Activated CD4-positive, alpha-beta T cell treated with anti-CD3 and anti-CD28 coated beads, Interleukin-2, amount 10 ng/mL, durations not matched to agents 24 days and 14 days (primary cell): ENCODE measurements at regions of chr5 and their contacts with region 1.

Region 1: DNA sequence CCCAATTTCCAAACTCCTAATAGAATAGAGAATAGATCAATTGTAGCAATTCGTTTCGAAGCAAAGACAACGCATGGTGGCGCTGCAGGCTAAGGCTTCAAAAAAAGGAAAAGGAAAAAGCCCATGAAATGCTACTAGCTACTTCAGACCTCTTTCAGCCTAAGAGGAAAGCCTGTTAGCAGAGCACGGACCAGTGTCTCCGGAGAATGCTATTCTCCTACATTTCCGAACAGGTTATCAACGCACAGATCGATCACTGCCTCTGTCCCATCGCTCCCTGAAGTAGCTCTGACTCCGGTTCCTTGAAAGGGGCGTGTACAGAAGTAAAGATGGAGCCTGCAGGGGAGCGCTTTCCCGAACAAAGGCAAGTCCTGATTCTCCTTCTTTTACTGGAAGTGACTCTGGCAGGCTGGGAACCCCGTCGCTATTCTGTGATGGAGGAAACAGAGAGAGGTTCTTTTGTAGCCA is at the start of gene PCDHB15:
- DNase-seq: peak; percentile 64
- H3K4me3 Mint-ChIP-seq: no peak within 1 kb of the TSS
- H3K27ac Mint-ChIP-seq: no peak within 1 kb of the TSS
- H3K4me1 Mint-ChIP-seq: no peaks in the 10 kb centered on the region
- H3K27me3 Mint-ChIP-seq: no peaks in the 10 kb centered on the region
- total RNA-seq, gene PCDHB15: not detected in 2 replicates

Region 2: DNA sequence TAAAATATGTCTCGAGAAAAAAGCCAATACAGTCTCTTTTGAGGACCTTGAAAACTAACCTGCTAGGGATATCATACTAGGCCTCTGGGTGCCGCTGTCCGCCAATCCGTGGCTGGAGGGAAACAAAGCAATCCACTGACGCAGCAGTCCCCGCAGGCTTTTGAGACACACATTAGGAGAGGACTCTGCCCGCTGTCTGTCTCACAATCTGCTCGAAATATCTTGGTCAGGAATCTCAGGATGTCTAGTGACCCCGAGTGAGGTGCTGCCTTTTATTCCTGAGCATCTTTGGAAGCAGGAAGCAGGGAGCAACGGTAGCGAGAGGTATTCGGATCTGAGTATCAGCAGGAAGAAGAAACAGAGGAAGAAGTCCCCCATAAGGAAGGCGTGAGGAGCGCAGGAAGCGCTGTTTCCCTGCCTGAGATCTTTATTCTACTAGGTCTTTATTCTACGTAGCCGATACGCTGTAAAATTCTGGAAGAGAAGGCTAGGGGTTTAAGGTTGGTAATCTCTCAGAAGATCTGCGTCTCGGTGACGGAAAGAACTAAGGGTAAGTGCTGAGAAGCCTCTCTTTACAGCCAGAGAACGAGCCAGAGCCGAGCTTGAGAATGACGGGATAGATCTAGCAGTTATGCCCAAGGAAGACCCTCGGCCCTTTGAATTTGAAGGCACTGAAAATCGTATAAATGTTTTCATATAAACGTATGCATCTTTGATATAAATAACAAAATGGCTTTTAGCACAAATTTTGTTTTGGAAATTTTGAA is 81.0 kb after region 1 on chr5:
- intact Hi-C with region 1: loop called (anchors 10 kb)
- DNase-seq: peak; percentile 90
- H3K4me3 Mint-ChIP-seq: peak overlapping the region; percentile 92
- H3K27ac Mint-ChIP-seq: peak overlapping the region; percentile 90
- H3K4me1 Mint-ChIP-seq: peaks cover 8% of the 10 kb centered on the region
- H3K27me3 Mint-ChIP-seq: peaks cover 12% of the 10 kb centered on the region

Region 3: DNA sequence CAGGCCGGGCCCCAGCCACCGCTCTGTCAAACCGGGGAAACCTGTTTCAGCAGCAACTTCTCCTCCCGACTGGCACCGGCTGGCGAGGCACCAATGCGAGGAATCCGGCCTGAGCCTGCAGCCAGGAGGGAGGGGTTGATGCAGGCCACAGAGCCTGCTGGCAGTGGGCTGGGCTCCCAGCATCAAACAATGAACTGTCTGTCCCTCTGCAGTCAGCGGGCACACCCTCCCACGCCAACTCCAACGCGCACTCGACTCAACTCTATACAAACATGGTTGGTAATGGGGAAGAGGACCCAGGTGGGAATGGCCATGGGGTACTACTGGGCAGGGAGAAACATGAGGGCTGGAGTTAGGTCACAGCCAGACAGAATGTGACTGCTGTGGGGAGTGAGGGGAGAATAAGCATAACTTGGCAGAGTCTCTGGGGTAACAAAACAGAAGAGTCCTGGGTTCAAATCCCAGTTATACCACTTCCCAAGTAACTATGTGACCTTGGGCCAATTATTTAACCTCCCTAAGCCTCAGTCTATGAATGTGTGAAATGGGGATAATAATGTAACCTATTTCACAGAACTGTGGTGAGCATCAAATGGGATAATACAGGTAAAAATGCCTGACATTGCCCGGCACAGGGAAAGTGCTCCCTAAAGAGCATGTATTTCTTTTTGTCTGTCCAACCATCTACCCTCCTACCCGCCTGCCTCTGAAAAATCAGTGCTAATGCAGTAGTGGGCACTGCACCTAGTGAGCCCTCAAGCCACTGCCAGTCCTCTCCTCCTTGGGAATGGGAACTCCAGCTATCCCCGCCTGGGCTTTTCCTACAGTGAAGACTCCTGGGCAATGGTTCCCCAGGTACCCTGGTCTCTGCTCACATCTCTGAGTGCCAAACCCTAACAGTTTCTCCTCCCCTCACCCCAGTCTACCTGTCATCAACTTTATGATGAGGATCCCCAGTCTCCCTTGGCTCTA is 621.2 kb after region 1 on chr5:
- intact Hi-C with region 1: no loop called
- DNase-seq: no peak
- H3K4me3 Mint-ChIP-seq: no peak overlapping the region
- H3K27ac Mint-ChIP-seq: no peak overlapping the region
- H3K4me1 Mint-ChIP-seq: no peaks in the 10 kb centered on the region
- H3K27me3 Mint-ChIP-seq: peaks cover 33% of the 10 kb centered on the region